CD4-positive, alpha-beta memory T cell (primary cell): ENCODE measurements at regions of chr1 and their contacts with region 1.

Region 1: GRCh38 chr1:184805667-184806295 is 51.1 kb upstream of the EDEM3 start:
- DNase-seq: peak; percentile 76 to 80 (median 78)
- H3K4me3 ChIP-seq: no peak overlapping the region
- H3K4me3 Mint-ChIP-seq: no peak overlapping the region
- H3K27ac ChIP-seq: no peak overlapping the region
- H3K27ac Mint-ChIP-seq: peak overlapping the region; percentile 53 to 94 (median 86)
- H3K4me1 ChIP-seq: no peaks in the 10 kb centered on the region
- H3K4me1 Mint-ChIP-seq: peaks cover 4 to 7% (median 5%) of the 10 kb centered on the region in 4 donors
- H3K27me3 ChIP-seq: no peaks in the 10 kb centered on the region
- H3K27me3 Mint-ChIP-seq: no peaks in the 10 kb centered on the region

Region 2: GRCh38 chr1:184793967-184794366 is 11.8 kb before region 1 on chr1:
- CTCF ChIA-PET with region 1: interaction called, 28 read pairs
- POLR2A ChIA-PET with region 1: no interaction called
- intact Hi-C with region 1: no loop called
- DNase-seq: no peak
- H3K4me3 ChIP-seq: no peak overlapping the region
- H3K4me3 Mint-ChIP-seq: no peak overlapping the region
- H3K27ac ChIP-seq: no peak overlapping the region
- H3K27ac Mint-ChIP-seq: no peak overlapping the region
- H3K4me1 ChIP-seq: peaks cover 7% of the 10 kb centered on the region
- H3K4me1 Mint-ChIP-seq: peaks cover 0 to 11% (median 4%) of the 10 kb centered on the region in 4 donors
- H3K27me3 ChIP-seq: no peaks in the 10 kb centered on the region
- H3K27me3 Mint-ChIP-seq: no peaks in the 10 kb centered on the region

Region 3: DNA sequence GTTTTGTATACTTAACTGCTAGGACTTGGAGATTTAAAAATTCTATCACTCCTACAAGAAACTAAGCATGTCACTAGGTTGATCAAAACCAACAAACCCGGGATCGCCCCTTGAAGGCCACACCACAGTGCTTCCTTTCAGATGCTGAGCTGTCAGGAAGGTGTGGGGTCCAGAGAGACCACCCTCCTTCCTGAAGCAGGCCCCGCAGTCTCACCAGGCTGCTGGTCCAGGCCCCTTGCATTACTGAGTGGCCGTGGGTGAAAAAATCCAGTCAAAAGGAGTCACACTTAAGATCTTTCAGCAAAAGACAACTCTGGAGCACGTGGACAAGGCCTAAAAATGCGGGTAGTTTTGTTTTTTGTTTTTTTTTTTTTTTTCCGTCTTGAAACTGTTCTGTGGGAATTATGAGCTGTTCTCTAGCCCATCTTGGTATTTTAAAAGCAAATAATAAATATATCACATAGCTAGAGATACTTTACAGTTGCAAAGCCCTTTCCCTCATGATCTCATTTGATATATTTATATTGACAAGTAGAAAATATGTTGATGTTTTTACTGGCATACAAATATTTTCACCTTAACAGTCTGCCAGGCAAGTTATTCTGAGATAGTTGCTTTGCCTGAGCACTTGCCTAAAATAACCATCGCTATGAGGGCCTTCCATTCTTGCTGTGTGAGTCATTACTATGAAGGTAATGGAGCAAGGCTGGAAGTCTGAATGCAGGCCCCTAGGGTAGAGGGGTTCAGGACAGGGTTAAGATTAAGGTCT is 22.0 kb after region 1 on chr1:
- CTCF ChIA-PET with region 1: interaction called, 11 read pairs
- POLR2A ChIA-PET with region 1: no interaction called
- intact Hi-C with region 1: no loop called
- DNase-seq: no peak
- H3K4me3 ChIP-seq: no peak overlapping the region
- H3K4me3 Mint-ChIP-seq: no peak overlapping the region
- H3K27ac ChIP-seq: no peak overlapping the region
- H3K27ac Mint-ChIP-seq: no peak overlapping the region
- H3K4me1 ChIP-seq: no peaks in the 10 kb centered on the region
- H3K4me1 Mint-ChIP-seq: peaks cover 0 to 3% (median 1%) of the 10 kb centered on the region in 4 donors
- H3K27me3 ChIP-seq: no peaks in the 10 kb centered on the region
- H3K27me3 Mint-ChIP-seq: no peaks in the 10 kb centered on the region

Region 4: GRCh38 chr1:184900507-184900906 is 94.7 kb after region 1 on chr1:
- CTCF ChIA-PET with region 1: interaction called, 10 read pairs
- POLR2A ChIA-PET with region 1: no interaction called
- intact Hi-C with region 1: no loop called
- DNase-seq: no peak
- H3K4me3 ChIP-seq: no peak overlapping the region
- H3K4me3 Mint-ChIP-seq: no peak overlapping the region
- H3K27ac ChIP-seq: no peak overlapping the region
- H3K27ac Mint-ChIP-seq: peak overlapping the region in 3 of 7 donors; percentile 15 to 82 (median 32)
- H3K4me1 ChIP-seq: peaks cover 18% of the 10 kb centered on the region
- H3K4me1 Mint-ChIP-seq: peaks cover 28 to 58% (median 36%) of the 10 kb centered on the region in 4 donors
- H3K27me3 ChIP-seq: no peaks in the 10 kb centered on the region
- H3K27me3 Mint-ChIP-seq: no peaks in the 10 kb centered on the region

Region 5: DNA sequence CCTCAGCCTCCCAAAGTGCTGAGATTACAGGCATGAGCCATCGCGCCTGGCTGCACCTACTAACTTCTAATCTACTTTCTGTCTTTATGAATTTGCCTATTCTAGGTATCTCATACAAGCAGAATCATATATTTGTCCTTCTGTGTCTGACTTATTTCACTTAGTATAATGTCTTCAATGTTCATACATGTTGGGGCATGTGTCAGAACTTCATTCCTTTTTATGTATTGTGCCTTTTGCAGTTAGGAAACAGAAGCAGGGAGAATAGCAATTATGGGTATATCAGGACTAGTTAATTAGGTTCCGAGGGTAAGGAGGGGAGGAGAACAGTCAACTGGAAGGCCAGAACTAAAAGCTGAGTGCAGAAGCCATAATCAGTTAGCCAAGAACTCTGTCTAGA is 186.5 kb after region 1 on chr1:
- CTCF ChIA-PET with region 1: interaction called, 506 read pairs
- POLR2A ChIA-PET with region 1: no interaction called
- intact Hi-C with region 1: no loop called
- DNase-seq: no peak
- H3K4me3 ChIP-seq: no peak overlapping the region
- H3K4me3 Mint-ChIP-seq: no peak overlapping the region
- H3K27ac ChIP-seq: no peak overlapping the region
- H3K27ac Mint-ChIP-seq: no peak overlapping the region
- H3K4me1 ChIP-seq: no peaks in the 10 kb centered on the region
- H3K4me1 Mint-ChIP-seq: no peaks in the 10 kb centered on the region
- H3K27me3 ChIP-seq: no peaks in the 10 kb centered on the region
- H3K27me3 Mint-ChIP-seq: peaks cover 9 to 21% of the 10 kb centered on the region in 2 donors

Region 6: GRCh38 chr1:185681034-185681633 is 875.4 kb after region 1 on chr1:
- CTCF ChIA-PET with region 1: interaction called, 10 read pairs
- POLR2A ChIA-PET with region 1: no interaction called
- intact Hi-C with region 1: loop called (anchors 5 kb)
- DNase-seq: peak in 4 of 5 donors; percentile 36 to 43 (median 38)
- H3K4me3 ChIP-seq: no peak overlapping the region
- H3K4me3 Mint-ChIP-seq: peak overlapping the region in 1 of 8 donors; percentile 34
- H3K27ac ChIP-seq: no peak overlapping the region
- H3K27ac Mint-ChIP-seq: no peak overlapping the region
- H3K4me1 ChIP-seq: peaks cover 26% of the 10 kb centered on the region
- H3K4me1 Mint-ChIP-seq: peaks cover 19 to 32% (median 26%) of the 10 kb centered on the region in 4 donors
- H3K27me3 ChIP-seq: no peaks in the 10 kb centered on the region
- H3K27me3 Mint-ChIP-seq: no peaks in the 10 kb centered on the region

Region 7: GRCh38 chr1:186212544-186213226 is 1406.9 kb after region 1 on chr1:
- CTCF ChIA-PET with region 1: no interaction called
- POLR2A ChIA-PET with region 1: no interaction called
- intact Hi-C with region 1: loop called (anchors 10 kb)
- DNase-seq: peak in 4 of 5 donors; percentile 2 to 11 (median 6)
- H3K4me3 ChIP-seq: no peak overlapping the region
- H3K4me3 Mint-ChIP-seq: no peak overlapping the region
- H3K27ac ChIP-seq: no peak overlapping the region
- H3K27ac Mint-ChIP-seq: no peak overlapping the region
- H3K4me1 ChIP-seq: no peaks in the 10 kb centered on the region
- H3K4me1 Mint-ChIP-seq: no peaks in the 10 kb centered on the region
- H3K27me3 ChIP-seq: no peaks in the 10 kb centered on the region
- H3K27me3 Mint-ChIP-seq: peaks cover 5 to 13% of the 10 kb centered on the region in 2 donors